GM18951 (cell line): ENCODE measurements at regions of chr6 and their contacts with region 1.

Region 1: DNA sequence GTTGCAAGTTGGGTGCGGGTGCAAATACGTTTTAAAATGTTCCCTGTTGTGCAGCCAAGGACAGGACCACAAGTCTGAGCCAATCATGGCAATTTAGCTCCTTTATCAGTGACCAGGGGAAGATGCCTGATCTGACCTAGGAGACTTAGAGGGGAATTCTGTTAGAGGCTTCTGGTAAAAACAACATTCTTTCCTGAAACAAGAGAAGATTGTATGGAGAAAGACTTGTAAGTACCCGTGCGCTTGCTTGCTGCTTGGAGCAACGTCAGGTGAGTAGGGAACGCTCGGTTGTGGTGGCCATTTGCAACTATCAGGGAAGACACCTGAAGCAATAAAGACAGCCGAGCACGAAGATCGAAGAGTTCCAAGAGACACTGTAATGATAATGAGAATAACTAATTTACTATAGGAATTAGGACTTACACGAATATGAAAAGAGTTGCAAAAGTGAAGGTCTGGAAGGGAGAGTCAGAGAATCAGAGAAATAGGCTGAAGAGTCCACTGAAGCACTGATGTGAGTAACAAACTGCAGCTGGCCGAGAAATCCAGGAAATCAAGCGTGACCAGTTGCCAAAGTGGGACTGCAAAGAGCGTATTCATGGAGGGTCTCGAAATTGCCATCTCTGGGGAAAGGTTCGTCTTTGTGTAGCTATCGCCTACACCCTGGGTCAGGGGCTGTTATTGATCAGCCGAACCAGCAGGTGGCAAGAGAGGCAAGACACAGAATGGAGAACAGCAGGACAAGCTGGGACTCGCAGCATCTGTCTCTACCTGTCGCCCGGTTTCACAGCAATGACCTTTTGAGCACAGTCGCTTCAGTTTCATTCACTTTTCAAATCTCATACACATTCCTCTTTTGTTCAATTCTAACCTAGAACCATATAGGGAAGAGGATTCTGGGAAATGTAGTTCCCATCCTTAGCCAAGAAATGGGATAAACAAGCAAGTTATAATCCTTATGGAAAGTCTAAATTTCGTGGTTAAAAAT is 26.1 kb downstream of the LOC128125822 start:
- POLR2A ChIP-seq: peak; percentile 21

Region 2: DNA sequence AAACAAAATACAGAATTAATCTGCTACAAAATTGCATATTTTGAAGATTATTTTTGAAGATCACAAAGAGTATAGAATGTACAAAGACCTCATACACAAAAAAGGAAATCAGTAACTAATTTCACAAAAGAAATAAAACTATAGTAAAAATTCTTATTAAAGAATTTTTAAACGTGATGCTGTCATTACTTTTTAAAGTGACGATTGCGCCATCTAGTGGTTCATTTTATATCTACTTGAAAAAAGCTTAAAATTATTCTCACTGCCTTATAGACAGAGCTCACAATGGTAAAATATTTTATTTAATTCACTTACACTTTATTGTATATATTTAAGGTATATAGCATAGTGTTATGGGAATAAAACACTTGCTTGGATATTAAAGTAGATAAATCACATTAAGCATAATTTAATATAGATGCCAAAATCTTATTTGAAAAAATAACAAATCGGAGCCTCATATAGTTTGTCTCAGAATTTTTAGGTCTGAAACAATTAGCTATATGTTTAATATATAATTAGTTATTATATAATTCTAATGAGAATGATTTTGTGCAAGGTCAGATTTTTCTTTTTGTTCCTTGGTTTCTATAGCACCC is 166.1 kb after region 1 on chr6:
- in situ Hi-C with region 1: loop called (anchors 10 kb)
- POLR2A ChIP-seq: no peak